Caco-2 (cell line): ENCODE measurements at regions of chr13 and their contacts with region 1.

Region 1: GRCh38 chr13:77329133-77329910 is 2.4 kb upstream of the MYCBP2 start:
- DNase-seq: peak; percentile 85 to 88
- H3K4me3 ChIP-seq: peak overlapping the region; percentile 81
- H3K4me3 Mint-ChIP-seq: peak overlapping the region; percentile 90
- H3K27ac Mint-ChIP-seq: no peak overlapping the region
- H3K4me1 ChIP-seq: peaks cover 12% of the 10 kb centered on the region
- H3K4me1 Mint-ChIP-seq: peaks cover 8% of the 10 kb centered on the region
- H3K27me3 ChIP-seq: no peaks in the 10 kb centered on the region
- H3K27me3 Mint-ChIP-seq: peaks cover 10% of the 10 kb centered on the region
- CTCF ChIP-seq: no peak

Region 2: DNA sequence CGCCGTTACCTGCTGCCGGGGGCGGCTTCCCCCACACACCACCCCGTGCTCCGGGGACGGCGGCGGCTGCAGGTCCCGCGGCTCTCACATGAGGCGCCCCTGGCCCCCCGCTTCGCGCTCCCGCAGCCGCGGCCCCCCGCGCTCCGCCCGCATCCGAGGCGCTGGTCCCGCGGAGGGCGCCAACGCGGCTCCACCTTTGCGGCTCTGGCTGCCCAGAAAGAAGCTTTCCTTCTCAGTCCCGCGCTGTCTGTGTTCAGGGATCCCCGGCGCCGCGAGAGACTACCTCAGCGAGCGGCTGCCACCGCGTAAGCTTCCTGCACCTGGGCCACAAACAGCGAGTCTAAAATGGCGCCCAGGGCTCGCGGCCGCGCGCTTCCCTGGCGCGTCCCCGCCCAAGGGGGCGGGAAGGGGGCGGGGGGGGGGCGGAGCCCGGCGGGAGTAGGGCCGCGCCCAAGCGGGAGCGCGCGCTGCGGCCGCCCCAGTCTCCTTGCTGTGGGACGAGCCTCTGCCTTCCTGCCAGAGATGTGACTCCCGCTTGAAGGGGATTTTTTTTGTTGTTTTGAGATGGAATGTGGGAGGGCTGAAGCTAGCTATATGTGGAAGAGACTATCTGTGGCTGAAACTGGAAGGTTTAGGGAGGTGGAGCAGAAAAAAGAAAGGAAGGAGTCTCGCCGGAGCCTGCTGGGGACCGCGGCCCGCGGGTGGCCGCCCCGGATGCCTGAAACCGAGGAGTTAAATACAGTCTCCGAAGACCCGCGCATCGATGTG is 302.3 kb before region 1 on chr13 and contains the start of gene FBXL3:
- CTCF ChIA-PET with region 1: interaction called, 4 read pairs
- POLR2A ChIA-PET with region 1: no interaction called
- intact Hi-C with region 1: loop called (anchors 2 kb)
- DNase-seq: peak; percentile 86 to 87
- H3K4me3 ChIP-seq: peak within 1 kb of the TSS; percentile 98
- H3K4me3 Mint-ChIP-seq: peak within 1 kb of the TSS; percentile 87
- H3K27ac Mint-ChIP-seq: peak within 1 kb of the TSS; percentile 88
- H3K4me1 ChIP-seq: peaks cover 22% of the 10 kb centered on the region
- H3K4me1 Mint-ChIP-seq: peaks cover 20% of the 10 kb centered on the region
- H3K27me3 ChIP-seq: no peaks in the 10 kb centered on the region
- H3K27me3 Mint-ChIP-seq: peaks cover under 1% of the 10 kb centered on the region
- CTCF ChIP-seq: no peak
- total RNA-seq, gene FBXL3: 26.0 and 31.8 TPM in 2 replicates

Region 3: GRCh38 chr13:77042566-77043178 is 286.6 kb before region 1 on chr13:
- CTCF ChIA-PET with region 1: no interaction called
- POLR2A ChIA-PET with region 1: no interaction called
- intact Hi-C with region 1: loop called (anchors 5 kb)
- DNase-seq: peak in 1 of 2 experiments; percentile 22
- H3K4me3 ChIP-seq: no peak overlapping the region
- H3K4me3 Mint-ChIP-seq: no peak overlapping the region
- H3K27ac Mint-ChIP-seq: peak overlapping the region; percentile 69
- H3K4me1 ChIP-seq: peaks cover 4% of the 10 kb centered on the region; the same call in 1 of the 2 replicates
- H3K4me1 Mint-ChIP-seq: peaks cover 10% of the 10 kb centered on the region
- H3K27me3 ChIP-seq: no peaks in the 10 kb centered on the region
- H3K27me3 Mint-ChIP-seq: no peaks in the 10 kb centered on the region
- CTCF ChIP-seq: no peak

Region 4: GRCh38 chr13:77084755-77085154 is 244.6 kb before region 1 on chr13:
- CTCF ChIA-PET with region 1: no interaction called
- POLR2A ChIA-PET with region 1: no interaction called
- intact Hi-C with region 1: loop called (anchors 5 kb)
- DNase-seq: no peak
- H3K4me3 ChIP-seq: no peak overlapping the region
- H3K4me3 Mint-ChIP-seq: no peak overlapping the region
- H3K27ac Mint-ChIP-seq: no peak overlapping the region
- H3K4me1 ChIP-seq: no peaks in the 10 kb centered on the region
- H3K4me1 Mint-ChIP-seq: no peaks in the 10 kb centered on the region
- H3K27me3 ChIP-seq: no peaks in the 10 kb centered on the region
- H3K27me3 Mint-ChIP-seq: no peaks in the 10 kb centered on the region
- CTCF ChIP-seq: no peak